ENCODE measurements at regions of chr7 and their contacts with region 1.

Region 1: GRCh38 chr7:139133335-139134139 is 24.0 kb upstream of the ZC3HAV1 start:
- DNase-seq: peak; percentile 77 to 96 (median 90)

Region 2: GRCh38 chr7:139230774-139231512 is 97.4 kb after region 1 on chr7 and contains the start of gene UBN2:
- intact Hi-C with region 1: loop called (anchors 5 kb)
- DNase-seq: peak; percentile 90 to 99 (median 98)

Region 3: DNA sequence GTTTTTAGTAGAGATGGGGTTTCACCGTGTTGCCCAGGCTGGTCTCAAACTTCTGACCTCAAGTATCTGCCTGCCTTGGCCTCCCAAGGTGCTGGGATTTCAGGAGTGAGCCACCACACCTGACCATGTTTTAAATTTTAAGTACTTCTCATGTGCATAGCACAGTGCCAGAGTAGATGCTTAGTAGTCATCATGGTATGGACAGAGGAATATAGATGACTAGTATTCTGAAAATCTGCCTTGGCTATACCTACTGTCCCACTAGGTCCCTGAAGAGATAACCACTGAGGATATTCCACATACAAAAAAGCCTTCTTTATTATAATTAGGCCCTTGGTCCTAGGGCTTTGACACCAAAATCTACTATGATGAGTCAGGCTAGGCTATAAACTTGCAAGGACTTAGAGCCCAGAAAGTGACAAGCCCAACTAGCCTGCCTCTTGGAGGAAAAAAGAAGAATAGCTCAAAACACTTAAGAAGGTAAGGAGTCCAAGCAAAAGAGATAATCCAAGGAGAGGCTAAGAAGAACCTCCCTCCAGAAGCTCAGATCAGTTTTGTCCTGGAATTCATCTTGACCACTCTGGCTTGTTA is 260.2 kb after region 1 on chr7:
- intact Hi-C with region 1: no loop called
- DNase-seq: no peak

Measured in head of caudate nucleus (tissue), 42 donors.